AG04450 (cell line): ENCODE measurements at regions of chr3 and their contacts with region 1.

Region 1: DNA sequence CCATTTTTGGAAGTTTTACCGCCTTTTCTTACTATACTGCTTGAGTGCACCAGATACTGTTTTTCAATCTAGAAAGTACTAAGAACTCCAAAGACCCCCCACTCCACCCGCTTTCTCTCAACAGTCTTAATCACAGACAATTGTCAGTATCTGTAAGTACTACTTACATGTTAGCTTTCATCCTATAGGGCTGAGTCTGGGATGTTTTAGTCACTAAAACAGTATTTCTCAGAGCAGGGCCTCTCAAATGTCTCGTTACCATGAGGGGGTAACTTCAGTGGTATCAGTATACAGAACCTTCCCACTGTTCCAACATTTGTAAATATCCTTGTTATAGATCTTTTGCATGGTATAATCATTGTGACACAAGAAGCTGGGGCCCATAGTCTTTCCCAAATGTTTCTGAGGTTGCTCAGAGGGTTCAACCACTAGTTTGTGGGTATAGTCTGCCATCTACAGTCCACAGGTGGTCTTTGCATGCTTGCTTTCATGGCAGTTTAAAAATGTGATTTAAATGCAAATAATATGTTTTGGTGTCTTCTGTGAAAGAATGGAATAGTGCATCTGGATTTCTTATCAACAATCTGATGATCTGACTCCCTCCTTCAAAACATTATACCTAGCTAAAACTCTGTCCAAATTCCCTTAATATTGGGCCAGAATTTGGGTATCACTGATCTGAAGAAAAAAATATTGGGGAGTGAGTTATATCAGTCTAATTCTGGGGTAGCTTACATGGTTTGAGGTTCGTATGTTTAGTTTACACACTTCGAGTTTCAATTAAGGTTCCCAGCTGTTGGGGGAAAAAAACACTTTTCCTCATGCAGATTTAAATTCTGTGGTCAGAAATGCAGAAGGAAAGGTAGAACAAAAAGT is 18.0 kb upstream of the DNAJC13 start:
- DNase-seq: peak; percentile 42
- H3K4me3 ChIP-seq: no peak overlapping the region
- H3K27ac ChIP-seq: no peak overlapping the region
- H3K27me3 ChIP-seq: no peaks in the 10 kb centered on the region
- CTCF ChIP-seq: peak; percentile 90

Region 2: DNA sequence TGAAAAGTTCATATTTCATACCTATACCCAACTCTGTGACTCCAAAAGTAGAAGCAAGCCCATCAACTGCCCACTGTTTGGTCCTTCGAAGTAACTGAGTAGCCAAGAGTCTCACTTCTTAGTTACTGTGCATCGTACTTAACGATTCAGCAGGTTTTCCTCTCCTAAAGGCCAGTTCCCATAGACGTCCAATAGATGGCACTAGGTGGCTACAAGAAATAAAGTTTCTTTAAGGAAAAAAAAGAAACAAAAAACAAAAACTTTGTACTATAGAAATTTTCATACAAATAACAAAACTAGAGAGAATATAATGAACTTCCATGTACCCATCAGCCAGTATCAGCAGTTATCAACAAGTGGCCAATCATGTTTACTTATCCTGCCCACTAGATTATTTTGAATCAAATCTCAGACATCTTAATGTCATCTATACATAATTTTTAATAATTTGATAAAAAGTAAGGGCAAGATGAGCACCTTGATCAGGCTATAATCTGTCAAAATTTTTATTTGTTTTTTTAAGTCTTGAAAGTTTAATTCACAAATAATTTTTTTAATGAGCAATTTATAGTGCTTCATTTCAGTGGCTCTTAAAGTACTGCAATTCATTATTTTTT is 145.9 kb before region 1 on chr3:
- CTCF ChIA-PET with region 1: interaction called, 30 read pairs
- POLR2A ChIA-PET with region 1: no interaction called
- DNase-seq: peak; percentile 41
- H3K4me3 ChIP-seq: no peak overlapping the region
- H3K27ac ChIP-seq: no peak overlapping the region
- H3K27me3 ChIP-seq: peaks cover 2% of the 10 kb centered on the region
- CTCF ChIP-seq: peak; percentile 91

Region 3: DNA sequence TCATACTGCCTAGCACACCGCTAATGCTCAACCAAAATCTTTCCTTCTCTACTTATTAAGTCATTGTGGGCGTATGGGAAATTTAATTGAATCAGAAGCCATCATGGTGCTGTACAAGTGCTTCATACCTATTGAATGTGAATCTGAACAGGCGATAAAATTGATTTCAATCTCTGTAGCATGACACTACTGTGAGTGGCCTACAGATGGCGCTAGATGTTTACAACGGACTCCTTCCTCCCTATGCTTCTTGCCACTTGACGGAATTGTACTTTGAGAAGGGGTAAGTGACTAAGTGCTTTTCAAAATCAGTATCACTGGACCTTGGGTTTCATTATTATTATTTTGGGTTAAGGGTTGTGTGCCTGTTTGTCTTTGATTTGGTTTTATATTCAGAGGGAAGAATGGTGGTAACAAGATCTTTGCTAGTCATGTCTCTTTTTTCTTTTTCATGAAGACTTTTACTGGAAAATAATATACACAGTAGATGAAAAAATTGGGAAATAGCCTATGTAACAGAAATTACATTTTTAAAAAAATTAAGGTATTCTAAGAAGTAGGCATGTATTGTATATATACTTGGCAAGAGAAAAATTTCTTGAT is 46.6 kb before region 1 on chr3:
- CTCF ChIA-PET with region 1: interaction called, 139 read pairs
- POLR2A ChIA-PET with region 1: no interaction called
- DNase-seq: peak; percentile 42
- H3K4me3 ChIP-seq: no peak overlapping the region
- H3K27ac ChIP-seq: no peak overlapping the region
- H3K27me3 ChIP-seq: peaks cover 7% of the 10 kb centered on the region
- CTCF ChIP-seq: peak; percentile 98

Region 4: DNA sequence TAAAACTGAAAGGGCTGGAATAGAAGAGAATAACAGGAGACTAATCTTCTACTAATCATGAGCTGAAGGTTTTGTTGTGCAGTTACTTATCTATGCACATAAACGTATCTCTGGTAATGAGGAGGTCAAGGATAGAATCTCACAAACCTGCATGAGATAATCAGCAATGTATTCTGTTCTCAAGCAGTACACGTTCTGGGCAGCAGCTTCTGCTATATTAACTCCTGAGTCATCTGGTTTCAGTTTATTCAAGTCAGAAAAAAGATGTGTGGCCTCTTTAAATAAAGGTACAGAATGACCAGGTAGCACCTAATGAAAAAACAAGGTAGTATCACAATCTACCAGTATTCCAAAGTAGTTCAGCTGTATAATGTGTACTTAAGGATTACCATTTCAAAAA is 1209.1 kb after region 1 on chr3:
- CTCF ChIA-PET with region 1: no interaction called
- POLR2A ChIA-PET with region 1: no interaction called
- DNase-seq: no peak
- H3K4me3 ChIP-seq: no peak overlapping the region
- H3K27ac ChIP-seq: no peak overlapping the region
- H3K27me3 ChIP-seq: no peaks in the 10 kb centered on the region
- CTCF ChIP-seq: no peak